ENCODE measurements at regions of chr19 and their contacts with region 1.

Region 1: GRCh38 chr19:51489113-51489512 is 10.8 kb downstream of the CEACAM18 start:
- DNase-seq: no peak
- H3K4me3 Mint-ChIP-seq: no peak overlapping the region
- H3K27ac Mint-ChIP-seq: no peak overlapping the region
- H3K4me1 Mint-ChIP-seq: peaks cover 10% of the 10 kb centered on the region
- H3K27me3 Mint-ChIP-seq: peaks cover 5% of the 10 kb centered on the region

Region 2: DNA sequence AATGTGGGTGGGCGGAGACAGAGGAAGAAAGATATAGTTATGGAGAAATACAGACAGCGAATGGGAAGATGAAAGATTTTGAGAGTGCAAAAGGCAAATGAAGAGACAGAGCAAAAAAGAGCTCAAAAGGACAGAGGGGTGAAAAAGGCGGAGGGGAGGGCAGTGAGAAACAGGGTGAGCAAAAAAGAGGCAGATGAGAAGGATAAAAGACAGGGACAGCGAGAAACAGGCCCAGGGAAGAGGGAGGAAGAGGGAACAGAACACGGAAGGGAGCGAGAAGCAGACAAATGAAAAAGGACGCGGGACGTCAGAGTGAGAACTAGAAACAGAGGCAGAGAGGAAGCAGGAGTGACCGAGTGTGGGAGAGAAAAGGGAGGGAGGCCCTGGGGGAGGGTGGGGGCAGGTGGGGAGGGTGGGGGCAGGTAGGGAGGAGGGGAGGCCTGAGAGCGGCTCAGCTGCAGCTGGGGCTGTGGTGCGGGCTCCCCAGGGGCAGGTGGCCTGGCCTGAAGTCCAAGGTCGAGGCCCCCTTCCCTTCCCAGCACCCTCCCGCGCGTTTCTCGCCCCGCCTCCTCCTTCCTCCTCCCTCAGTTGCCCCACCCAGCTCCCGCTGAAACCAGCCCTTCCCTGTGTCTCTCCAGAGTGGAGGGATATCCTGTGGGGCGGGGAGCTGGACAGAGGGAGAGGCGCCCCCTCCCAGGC is 668.4 kb before region 1 on chr19:
- CTCF ChIA-PET with region 1: interaction called, 11 read pairs
- POLR2A ChIA-PET with region 1: no interaction called
- DNase-seq: no peak
- H3K4me3 Mint-ChIP-seq: peak overlapping the region; percentile 11
- H3K27ac Mint-ChIP-seq: peak overlapping the region; percentile 15
- H3K4me1 Mint-ChIP-seq: peaks cover 34% of the 10 kb centered on the region
- H3K27me3 Mint-ChIP-seq: peaks cover 40% of the 10 kb centered on the region

Measured in activated CD4-positive, alpha-beta T cell treated with anti-CD3 and anti-CD28 coated beads, Interleukin-2, amount 10 ng/mL, durations not matched to agents 7 days and 5 days (primary cell).